Posterior cingulate gyrus (tissue), 11 donors: ENCODE measurements at regions of chr2 and their contacts with region 1.

Region 1: GRCh38 chr2:20135631-20136050 is 84.2 kb upstream of the LAPTM4A start:
- DNase-seq: peak in 7 of 10 donors; percentile 24 to 89 (median 54)

Region 2: DNA sequence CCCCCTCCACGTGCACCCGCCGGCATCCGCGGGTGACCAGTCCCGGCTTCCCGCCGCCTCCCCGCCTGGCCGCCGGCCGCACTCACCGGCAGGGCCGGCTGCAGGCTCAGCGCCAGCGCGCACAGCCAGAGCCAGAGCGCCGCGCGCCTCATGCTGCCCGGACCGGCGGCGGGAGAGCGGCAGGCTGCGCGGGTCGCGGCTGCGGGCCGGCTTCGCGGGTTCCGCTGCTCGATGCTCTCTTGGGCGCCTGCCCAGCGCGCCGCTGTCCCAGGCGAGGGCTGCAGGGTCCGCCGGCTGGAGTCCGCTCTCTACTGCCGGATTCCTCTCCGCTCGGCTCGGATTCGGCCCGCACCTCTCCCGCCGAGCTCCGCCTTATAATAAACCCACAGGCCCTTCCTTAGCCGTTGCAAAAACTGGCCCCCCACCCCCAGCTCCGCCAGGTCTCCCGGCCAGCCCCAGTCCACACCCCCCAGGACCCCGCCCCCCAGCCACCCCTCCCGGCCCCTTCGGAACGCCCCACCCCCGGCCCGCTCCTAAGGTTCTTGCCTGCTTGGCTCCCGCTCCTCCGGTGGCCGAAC is 89.2 kb after region 1 on chr2 and contains the start of gene SDC1:
- intact Hi-C with region 1: loop called (anchors 5 kb)
- DNase-seq: peak in 6 of 10 donors; percentile 16 to 85 (median 57)